ENCODE measurements at regions of chr11 and their contacts with region 1.

Region 1: DNA sequence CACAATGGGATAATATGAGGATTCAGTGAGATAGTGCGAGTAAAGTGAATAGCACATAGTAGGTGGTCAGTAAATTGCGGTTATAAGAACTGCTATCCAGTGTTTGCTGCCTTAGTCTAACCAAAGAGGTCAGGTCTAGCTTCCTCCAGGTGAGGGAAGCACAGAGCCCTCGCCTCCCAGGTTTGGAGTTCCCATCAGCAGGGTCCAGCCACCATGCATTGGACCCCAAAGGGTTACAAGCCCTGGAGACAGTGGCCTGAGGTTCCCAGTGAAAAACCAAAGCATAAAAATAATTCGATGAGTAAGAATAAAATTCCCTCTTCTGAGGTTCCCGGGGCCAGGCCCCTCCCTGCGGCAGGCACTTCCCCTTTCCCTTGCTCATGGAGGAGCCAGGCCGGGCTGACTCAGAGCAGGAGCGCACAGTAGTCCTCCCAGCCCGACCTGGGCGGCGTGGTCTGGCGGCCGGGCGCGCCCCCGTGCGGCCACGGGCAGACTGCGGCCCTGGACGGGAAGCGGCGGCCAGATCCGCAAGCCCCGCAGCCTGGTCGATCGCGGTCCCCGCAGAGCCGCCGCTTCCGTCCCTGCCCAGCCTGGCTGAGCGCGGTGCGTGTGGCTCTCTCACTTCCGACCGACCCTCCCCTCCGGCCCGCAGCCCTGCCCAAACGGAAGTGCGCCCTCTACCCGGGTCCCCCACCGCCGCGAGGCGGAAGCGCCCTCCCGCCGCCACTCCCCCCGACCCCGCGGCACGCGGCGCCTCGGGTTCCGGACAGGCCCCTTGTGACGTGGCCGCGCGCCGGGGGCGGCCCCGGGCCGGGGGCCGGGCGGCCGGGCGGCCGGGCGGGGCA is at the start of gene SLC39A13:
- DNase-seq: peak; percentile 91 to 98
- H3K4me3 ChIP-seq: peak within 1 kb of the TSS; percentile 82 to 87
- H3K27ac ChIP-seq: peak within 1 kb of the TSS; percentile 95 to 99
- H3K4me1 ChIP-seq: peaks cover 10 to 33% of the 10 kb centered on the region in 2 donors
- H3K27me3 ChIP-seq: no peaks in the 10 kb centered on the region
- CTCF ChIP-seq: peak; percentile 78 to 99 (median 85)
- total RNA-seq, gene SLC39A13: 246 TPM

Region 2: GRCh38 chr11:45917623-45918330 is 1490.2 kb before region 1 on chr11 and contains the start of gene PEX16:
- intact Hi-C with region 1: loop called (anchors 5 kb)
- DNase-seq: peak; percentile 93 to 99
- H3K4me3 ChIP-seq: peak within 1 kb of the TSS; percentile 67 to 91
- H3K27ac ChIP-seq: peak within 1 kb of the TSS; percentile 90 to 91
- H3K4me1 ChIP-seq: peaks cover 5 to 18% of the 10 kb centered on the region in 2 donors
- H3K27me3 ChIP-seq: peaks cover 11% of the 10 kb centered on the region
- CTCF ChIP-seq: no peak
- total RNA-seq, gene PEX16: 77.9 TPM

Region 3: GRCh38 chr11:47176328-47177228 is 231.4 kb before region 1 on chr11 and contains the start of gene ARFGAP2:
- intact Hi-C with region 1: loop called (anchors 2 kb)
- DNase-seq: peak; percentile 89 to 98
- H3K4me3 ChIP-seq: peak within 1 kb of the TSS; percentile 98 to 99
- H3K27ac ChIP-seq: peak within 1 kb of the TSS; percentile 98 to 99
- H3K4me1 ChIP-seq: peaks cover 15 to 33% of the 10 kb centered on the region in 2 donors
- H3K27me3 ChIP-seq: no peaks in the 10 kb centered on the region
- CTCF ChIP-seq: no peak
- total RNA-seq, gene ARFGAP2: 66.1 TPM

Region 4: GRCh38 chr11:47373876-47374720 is 33.9 kb before region 1 on chr11:
- intact Hi-C with region 1: loop called (anchors 1 kb)
- DNase-seq: peak in 1 of 2 donors; percentile 91
- H3K4me3 ChIP-seq: no peak overlapping the region
- H3K27ac ChIP-seq: peak overlapping the region in 1 of 2 donors; percentile 3
- H3K4me1 ChIP-seq: peaks cover 0 to 3% of the 10 kb centered on the region in 2 donors
- H3K27me3 ChIP-seq: no peaks in the 10 kb centered on the region
- CTCF ChIP-seq: peak; percentile 78 to 96 (median 92)

Region 5: GRCh38 chr11:47454180-47454644 is 46.2 kb after region 1 on chr11:
- intact Hi-C with region 1: loop called (anchors 2 kb)
- DNase-seq: peak; percentile 49 to 87
- H3K4me3 ChIP-seq: no peak overlapping the region
- H3K27ac ChIP-seq: no peak overlapping the region
- H3K4me1 ChIP-seq: no peaks in the 10 kb centered on the region
- H3K27me3 ChIP-seq: no peaks in the 10 kb centered on the region
- CTCF ChIP-seq: peak; percentile 71 to 77 (median 76)

Region 6: GRCh38 chr11:47766305-47767227 is 358.6 kb after region 1 on chr11:
- intact Hi-C with region 1: loop called (anchors 5 kb)
- DNase-seq: peak in 1 of 2 donors; percentile 83
- H3K4me3 ChIP-seq: peak overlapping the region; percentile 80 to 87
- H3K27ac ChIP-seq: peak overlapping the region; percentile 96 to 99
- H3K4me1 ChIP-seq: peaks cover 0 to 15% of the 10 kb centered on the region in 2 donors
- H3K27me3 ChIP-seq: no peaks in the 10 kb centered on the region
- CTCF ChIP-seq: no peak

Measured in ascending aorta (tissue), 2 donors.